Activated CD4-positive, alpha-beta memory T cell treated with anti-CD3 and anti-CD28 coated beads for 36 hours (primary cell): ENCODE measurements at regions of chr1 and their contacts with region 1.

Region 1: DNA sequence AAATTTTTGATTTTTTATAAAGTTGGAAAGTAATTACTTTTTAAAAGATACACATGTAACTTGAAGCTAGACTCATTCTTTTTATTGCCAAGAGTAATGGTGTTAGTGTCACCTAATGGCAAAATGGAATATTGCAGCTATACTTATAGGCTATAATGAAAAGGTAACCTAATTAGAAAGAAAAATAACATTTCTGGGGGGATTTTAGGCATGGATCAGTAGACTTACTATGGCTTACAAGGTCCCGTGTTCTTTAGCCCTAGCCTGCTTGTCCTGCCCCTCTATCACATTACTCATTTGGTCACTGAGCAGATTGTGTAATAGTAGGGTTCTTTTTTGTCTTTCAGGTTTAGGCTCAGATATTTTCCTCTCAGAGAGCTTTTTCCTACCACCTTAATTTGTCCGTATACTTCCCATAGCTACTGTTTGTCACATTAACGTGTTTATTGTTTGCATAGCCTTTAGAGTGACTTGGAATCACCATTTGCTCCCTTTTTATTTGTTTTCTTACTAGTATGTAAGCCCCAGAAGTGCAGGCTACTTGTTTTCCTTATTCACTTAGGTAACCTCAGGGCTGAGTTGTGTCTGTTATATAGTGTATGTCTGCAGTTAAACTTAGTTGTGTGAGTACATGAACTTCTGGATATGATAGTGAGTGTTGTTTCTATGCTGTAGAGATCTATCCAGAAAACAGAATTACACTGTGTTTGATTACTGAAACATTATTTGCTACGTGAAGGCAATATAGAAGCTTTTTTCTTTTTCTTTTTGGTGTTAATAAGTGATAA is 58.7 kb downstream of the RABGAP1L start:
- DNase-seq: no peak
- H3K4me3 Mint-ChIP-seq: no peak overlapping the region
- H3K27ac Mint-ChIP-seq: no peak overlapping the region
- H3K4me1 Mint-ChIP-seq: peaks cover 11% of the 10 kb centered on the region
- H3K27me3 Mint-ChIP-seq: no peaks in the 10 kb centered on the region

Region 2: DNA sequence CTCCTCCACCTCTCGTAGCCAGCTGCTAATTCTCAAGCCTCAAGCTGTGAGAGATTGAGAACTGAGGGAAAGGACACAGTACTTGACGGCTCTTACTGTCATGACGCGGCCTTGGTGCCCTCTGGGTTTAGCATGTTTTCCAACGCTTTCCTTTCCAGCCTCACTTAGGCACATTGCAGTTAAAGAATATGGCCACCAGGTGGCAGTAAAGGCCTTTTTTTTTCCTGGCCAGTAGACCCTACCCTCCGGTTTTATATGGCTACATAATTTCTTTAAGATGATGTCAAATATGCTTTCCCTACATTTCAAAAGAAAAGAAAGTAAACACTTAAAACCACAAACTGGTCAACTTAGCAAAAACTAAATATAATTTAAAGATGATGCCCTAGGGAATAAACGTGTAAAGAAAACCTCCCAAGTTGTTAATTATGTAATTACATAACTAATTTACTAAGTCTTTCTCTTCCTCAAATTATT is 797.6 kb before region 1 on chr1:
- CTCF ChIA-PET with region 1: no interaction called
- POLR2A ChIA-PET with region 1: no interaction called
- intact Hi-C with region 1: loop called (anchors 1 kb)
- DNase-seq: peak; percentile 72
- H3K4me3 Mint-ChIP-seq: no peak overlapping the region
- H3K27ac Mint-ChIP-seq: no peak overlapping the region
- H3K4me1 Mint-ChIP-seq: peaks cover 8% of the 10 kb centered on the region
- H3K27me3 Mint-ChIP-seq: no peaks in the 10 kb centered on the region

Region 3: GRCh38 chr1:174097426-174097825 is 120.6 kb before region 1 on chr1:
- CTCF ChIA-PET with region 1: interaction called, 6 read pairs
- POLR2A ChIA-PET with region 1: no interaction called
- intact Hi-C with region 1: loop called (anchors 5 kb)
- DNase-seq: no peak
- H3K4me3 Mint-ChIP-seq: no peak overlapping the region
- H3K27ac Mint-ChIP-seq: no peak overlapping the region
- H3K4me1 Mint-ChIP-seq: no peaks in the 10 kb centered on the region
- H3K27me3 Mint-ChIP-seq: peaks cover 1% of the 10 kb centered on the region

Region 4: GRCh38 chr1:174134003-174134659 is 83.8 kb before region 1 on chr1:
- CTCF ChIA-PET with region 1: no interaction called
- POLR2A ChIA-PET with region 1: no interaction called
- intact Hi-C with region 1: no loop called
- DNase-seq: no peak
- H3K4me3 Mint-ChIP-seq: no peak overlapping the region
- H3K27ac Mint-ChIP-seq: no peak overlapping the region
- H3K4me1 Mint-ChIP-seq: no peaks in the 10 kb centered on the region
- H3K27me3 Mint-ChIP-seq: no peaks in the 10 kb centered on the region